ENCODE measurements at regions of chr3 and their contacts with region 1.

Region 1: DNA sequence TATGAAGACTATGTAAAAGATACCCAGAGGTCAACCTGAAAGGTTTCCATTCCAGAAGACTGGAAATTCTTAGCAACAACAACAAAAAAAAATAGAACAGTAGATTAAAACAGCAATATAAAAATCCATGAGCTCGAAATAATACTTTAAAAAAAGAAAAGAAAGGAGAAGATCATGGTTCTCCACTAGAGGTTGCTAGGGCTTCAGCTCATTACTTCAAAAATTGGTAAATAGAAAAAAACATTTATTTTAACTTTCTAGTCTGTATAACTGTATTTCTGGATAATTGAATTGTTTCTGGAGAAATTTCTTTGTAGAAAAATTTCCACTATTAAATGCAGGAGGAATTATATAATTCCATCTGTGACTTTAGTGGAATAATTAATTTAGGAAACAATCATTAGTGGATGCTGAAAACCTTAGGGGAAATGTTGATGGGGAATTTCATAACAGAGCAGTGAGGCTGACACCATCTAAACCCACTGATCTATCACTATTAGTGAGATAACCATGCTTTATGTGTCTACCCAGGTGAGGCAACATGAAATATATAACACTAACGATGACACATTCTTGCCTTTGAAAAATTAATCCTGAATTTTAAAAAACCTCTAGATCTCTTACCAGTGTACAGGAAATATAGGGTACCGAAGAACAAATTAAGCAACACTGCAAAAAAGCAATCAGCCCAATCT is 62.5 kb upstream of the SNRK start:
- DNase-seq: peak; percentile 63
- H3K4me3 ChIP-seq: no peak overlapping the region
- H3K27ac ChIP-seq: peak overlapping the region; percentile 14
- H3K4me1 ChIP-seq: no peaks in the 10 kb centered on the region
- H3K27me3 ChIP-seq: no peaks in the 10 kb centered on the region
- CTCF ChIP-seq: peak; percentile 21 to 34
- POLR2A ChIP-seq: no peak

Region 2: GRCh38 chr3:43162230-43163084 is 61.4 kb before region 1 on chr3:
- CTCF ChIA-PET with region 1: interaction called, 58 read pairs
- POLR2A ChIA-PET with region 1: no interaction called
- dilution Hi-C with region 1: no loop called
- intact Hi-C with region 1: loop called (anchors 1 kb)
- DNase-seq: peak; percentile 86
- H3K4me3 ChIP-seq: no peak overlapping the region
- H3K27ac ChIP-seq: peak overlapping the region; percentile 65
- H3K4me1 ChIP-seq: peaks cover 12% of the 10 kb centered on the region
- H3K27me3 ChIP-seq: no peaks in the 10 kb centered on the region
- CTCF ChIP-seq: peak; percentile 33 to 36
- POLR2A ChIP-seq: no peak

Region 3: DNA sequence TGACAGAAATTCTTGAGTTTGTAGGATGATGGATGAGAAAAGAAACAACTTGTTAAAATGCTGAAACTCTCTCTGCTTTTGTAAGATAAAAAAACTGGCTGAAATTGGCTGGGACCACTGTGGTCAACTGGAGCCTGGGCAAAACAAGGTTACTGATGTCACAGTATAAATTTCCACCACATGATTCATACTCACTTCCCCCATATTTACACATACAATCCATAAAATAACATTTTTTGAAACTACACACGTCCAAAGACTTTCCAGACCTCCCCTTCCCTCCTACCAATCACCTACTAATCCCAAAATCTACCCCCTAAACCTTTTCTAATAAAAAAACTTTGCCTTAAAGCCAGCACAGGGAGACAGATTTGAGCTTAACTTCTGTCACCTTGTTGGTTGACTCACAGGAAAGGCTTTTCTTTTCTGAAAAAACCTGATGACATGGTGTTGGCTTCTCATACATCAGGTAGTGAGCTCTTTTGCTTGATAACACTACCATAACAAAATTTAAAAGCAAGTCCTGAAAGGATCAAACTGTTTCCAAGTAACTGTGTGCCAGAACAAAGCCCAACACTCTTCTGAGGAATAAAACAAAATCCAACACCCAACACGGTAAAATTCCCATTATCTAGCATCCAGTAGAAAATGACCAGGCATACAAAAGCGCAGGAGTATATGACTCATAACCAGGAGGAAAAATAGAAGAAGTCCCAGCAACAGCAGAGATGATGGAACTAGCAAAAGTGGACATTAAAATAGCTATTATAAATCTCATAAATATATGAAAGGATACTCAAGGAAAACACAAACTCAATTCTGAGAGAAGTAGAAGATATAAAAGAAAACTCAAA is 24.8 kb before region 1 on chr3:
- CTCF ChIA-PET with region 1: interaction called, 6 read pairs
- POLR2A ChIA-PET with region 1: no interaction called
- dilution Hi-C with region 1: no loop called
- intact Hi-C with region 1: loop called (anchors 2 kb)
- DNase-seq: peak; percentile 61
- H3K4me3 ChIP-seq: no peak overlapping the region
- H3K27ac ChIP-seq: peak overlapping the region; percentile 77
- H3K4me1 ChIP-seq: peaks cover 23% of the 10 kb centered on the region
- H3K27me3 ChIP-seq: no peaks in the 10 kb centered on the region
- CTCF ChIP-seq: no peak
- POLR2A ChIP-seq: no peak

Region 4: GRCh38 chr3:43286115-43286840 is 62.5 kb after region 1 on chr3 and contains the start of gene SNRK:
- CTCF ChIA-PET with region 1: interaction called, 45 read pairs
- POLR2A ChIA-PET with region 1: interaction called, 7 read pairs
- dilution Hi-C with region 1: no loop called
- intact Hi-C with region 1: loop called (anchors 1 kb)
- DNase-seq: peak; percentile 99
- H3K4me3 ChIP-seq: peak within 1 kb of the TSS; percentile 60 to 100 (median 99)
- H3K27ac ChIP-seq: peak within 1 kb of the TSS; percentile 100
- H3K4me1 ChIP-seq: peaks cover 43% of the 10 kb centered on the region
- H3K27me3 ChIP-seq: no peaks in the 10 kb centered on the region
- CTCF ChIP-seq: peak; percentile 32 to 42
- POLR2A ChIP-seq: peak; percentile 87
- total RNA-seq, gene SNRK: 99.9 and 108 TPM in 2 replicates

Region 5: DNA sequence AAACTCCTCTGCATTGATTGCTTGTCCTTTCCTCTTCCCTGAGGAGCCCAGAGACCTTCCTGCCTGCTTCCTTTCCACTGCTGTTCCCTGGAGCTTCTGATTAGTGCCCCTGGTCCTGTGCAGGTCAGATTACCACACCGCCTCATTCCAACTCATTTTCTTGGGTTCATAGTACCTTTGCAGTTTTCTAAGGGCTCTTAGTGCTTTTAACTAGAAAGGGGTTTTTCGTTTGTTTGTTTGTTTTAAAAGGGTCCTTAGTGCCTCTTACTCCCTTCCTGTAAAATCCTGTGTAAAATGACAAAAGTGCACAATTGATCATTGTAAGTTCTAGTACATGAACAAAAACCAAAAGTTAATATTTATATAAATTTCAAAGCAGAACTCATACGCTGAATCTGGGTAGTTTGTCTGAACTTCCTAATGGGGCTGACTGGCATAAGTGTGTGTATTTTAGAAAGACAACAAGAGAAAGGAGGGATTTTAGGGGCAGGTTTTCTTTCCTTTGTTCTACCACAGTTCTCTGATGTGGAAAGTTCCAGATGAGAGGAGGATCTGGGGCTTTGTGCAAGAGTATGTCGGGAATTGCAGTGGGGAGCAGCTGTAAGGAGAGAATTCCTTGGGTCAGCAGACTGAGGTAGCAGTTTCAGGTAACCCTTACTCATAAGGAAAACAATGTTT is 93.1 kb after region 1 on chr3:
- CTCF ChIA-PET with region 1: interaction called, 11 read pairs
- POLR2A ChIA-PET with region 1: no interaction called
- dilution Hi-C with region 1: no loop called
- intact Hi-C with region 1: no loop called
- DNase-seq: peak; percentile 30
- H3K4me3 ChIP-seq: no peak overlapping the region
- H3K27ac ChIP-seq: peak overlapping the region; percentile 36
- H3K4me1 ChIP-seq: peaks cover 30% of the 10 kb centered on the region
- H3K27me3 ChIP-seq: no peaks in the 10 kb centered on the region
- CTCF ChIP-seq: no peak
- POLR2A ChIP-seq: no peak

Region 6: DNA sequence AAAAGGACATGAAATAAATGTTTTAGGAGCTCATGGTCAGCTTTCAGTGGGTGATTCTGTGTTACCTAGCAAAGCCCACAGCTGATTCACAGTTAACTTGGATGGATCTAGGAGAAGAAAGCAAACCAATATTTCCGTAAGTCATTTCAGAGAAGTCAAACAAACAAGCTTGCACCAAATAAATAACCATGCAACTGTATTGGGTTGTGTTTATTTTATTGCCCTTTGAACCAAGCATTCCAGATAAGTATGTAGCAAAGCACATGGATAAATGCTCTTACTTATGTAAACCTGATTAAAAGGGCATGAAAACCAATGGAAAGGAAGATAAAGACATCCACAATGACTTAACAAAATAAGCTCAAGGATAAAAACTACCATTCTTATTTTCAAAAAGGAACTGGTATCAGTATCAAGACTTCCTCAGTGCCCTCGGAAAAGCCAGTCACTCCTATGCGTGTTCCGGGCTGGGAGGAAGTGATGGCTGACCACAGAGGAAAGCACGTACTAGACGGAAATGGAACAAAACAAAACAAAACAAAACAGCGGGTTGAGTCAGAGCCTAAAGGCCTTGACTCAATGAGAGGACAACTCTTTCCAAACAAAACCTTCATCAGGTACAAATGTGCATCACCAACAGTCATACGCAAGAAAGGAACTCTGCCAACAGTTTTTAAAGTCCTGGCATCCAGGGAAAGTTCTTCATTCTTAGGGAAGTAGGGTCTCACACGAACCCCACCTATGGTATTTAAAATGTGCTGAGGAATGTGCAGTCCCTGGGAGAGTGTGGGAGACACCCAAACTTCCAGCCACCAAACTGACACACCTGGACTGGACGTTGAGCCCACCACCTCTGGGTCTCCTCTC is 165.8 kb after region 1 on chr3:
- CTCF ChIA-PET with region 1: interaction called, 19 read pairs
- POLR2A ChIA-PET with region 1: no interaction called
- dilution Hi-C with region 1: no loop called
- intact Hi-C with region 1: loop called (anchors 1 kb)
- DNase-seq: peak; percentile 97
- H3K4me3 ChIP-seq: no peak overlapping the region
- H3K27ac ChIP-seq: peak overlapping the region; percentile 97
- H3K4me1 ChIP-seq: peaks cover 68% of the 10 kb centered on the region
- H3K27me3 ChIP-seq: no peaks in the 10 kb centered on the region
- CTCF ChIP-seq: no peak
- POLR2A ChIP-seq: peak; percentile 90

Region 7: GRCh38 chr3:43690400-43691119 is 466.7 kb after region 1 on chr3 and contains the start of gene ABHD5:
- CTCF ChIA-PET with region 1: interaction called, 3 read pairs
- POLR2A ChIA-PET with region 1: no interaction called
- dilution Hi-C with region 1: no loop called
- intact Hi-C with region 1: loop called (anchors 1 kb)
- DNase-seq: peak; percentile 97
- H3K4me3 ChIP-seq: peak within 1 kb of the TSS; percentile 62 to 88 (median 87)
- H3K27ac ChIP-seq: peak within 1 kb of the TSS; percentile 76
- H3K4me1 ChIP-seq: peaks cover 12% of the 10 kb centered on the region
- H3K27me3 ChIP-seq: peaks cover 0 to 1% of the 10 kb centered on the region in 2 experiments
- CTCF ChIP-seq: peak; percentile 17 to 55
- POLR2A ChIP-seq: peak; percentile 100
- total RNA-seq, gene ABHD5: 17.1 and 21.2 TPM in 2 replicates